Heart right ventricle (tissue), 16 donors: ENCODE measurements at regions of chr4 and their contacts with region 1.

Region 1: DNA sequence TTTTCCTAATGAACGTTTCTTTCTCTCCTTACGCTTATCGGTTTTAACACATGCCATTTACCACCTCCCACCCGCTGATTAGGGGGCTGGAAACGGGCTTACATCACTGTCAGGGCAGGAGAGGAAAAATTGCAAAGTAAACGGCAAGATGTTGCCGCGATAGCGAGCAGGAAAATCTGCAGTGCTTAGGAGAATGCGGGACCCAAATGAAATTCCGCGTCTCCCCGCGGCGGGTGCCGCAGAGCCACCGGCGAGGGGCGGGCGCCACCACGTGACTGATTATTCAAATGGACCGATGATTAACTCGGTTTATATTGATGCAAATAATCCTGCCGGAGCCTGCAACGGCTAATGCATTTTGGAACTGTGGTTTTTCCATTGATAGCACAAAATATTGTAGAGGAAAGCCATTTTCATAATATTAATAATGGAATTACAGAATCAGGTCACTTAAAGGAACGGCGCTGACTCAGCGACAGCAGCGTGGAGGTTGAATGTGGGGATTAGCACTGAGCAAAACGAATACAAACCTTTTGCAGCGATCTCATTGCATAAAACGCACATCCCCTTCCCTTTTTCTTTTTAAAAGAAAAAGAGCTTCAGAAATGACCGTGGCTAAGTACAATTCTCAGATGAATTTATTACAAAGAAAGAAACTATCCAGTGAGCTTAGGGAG is 224.2 kb downstream of the STIM2 start:
- DNase-seq: no peak
- ATAC-seq: peak in 1 of 8 donors; percentile 41
- H3K4me3 ChIP-seq: peak overlapping the region in 9 of 10 donors; percentile 0 to 46 (median 36)
- H3K27ac ChIP-seq: no peak overlapping the region
- H3K4me1 ChIP-seq: peaks cover 0 to 24% (median 9%) of the 10 kb centered on the region in 9 donors
- H3K27me3 ChIP-seq: peaks cover 0 to 69% (median 62%) of the 10 kb centered on the region in 7 donors
- CTCF ChIP-seq: peak in 2 of 9 donors; percentile 26 to 30

Region 2: DNA sequence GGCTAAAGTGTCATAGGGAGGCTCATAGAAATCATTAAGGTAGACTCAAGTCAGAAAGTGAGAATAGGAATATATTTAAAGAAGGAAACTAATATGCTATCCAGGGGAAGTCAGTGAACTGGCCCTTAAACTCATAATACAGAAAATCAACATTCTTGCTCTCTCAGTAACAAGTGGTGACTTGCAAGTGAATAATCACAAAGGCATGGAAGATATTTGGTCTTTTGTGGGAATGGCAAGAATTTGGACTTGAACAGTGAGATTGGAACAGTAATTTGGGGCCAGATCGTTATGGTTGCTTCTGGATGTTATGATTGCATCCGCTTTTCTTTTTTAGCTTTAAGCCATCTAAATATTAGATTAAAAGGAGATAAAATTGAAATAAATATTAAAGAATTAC is 397.1 kb before region 1 on chr4:
- intact Hi-C with region 1: no loop called
- DNase-seq: no peak
- ATAC-seq: no peak
- H3K4me3 ChIP-seq: no peak overlapping the region
- H3K27ac ChIP-seq: no peak overlapping the region
- H3K4me1 ChIP-seq: no peaks in the 10 kb centered on the region
- H3K27me3 ChIP-seq: no peaks in the 10 kb centered on the region
- CTCF ChIP-seq: no peak

Region 3: GRCh38 chr4:26916195-26916594 is 168.6 kb before region 1 on chr4:
- intact Hi-C with region 1: loop called in 1 of 10 experiments (anchors 10 kb)
- DNase-seq: no peak
- ATAC-seq: no peak
- H3K4me3 ChIP-seq: no peak overlapping the region
- H3K27ac ChIP-seq: no peak overlapping the region
- H3K4me1 ChIP-seq: peaks cover 0 to 44% (median 9%) of the 10 kb centered on the region in 9 donors
- H3K27me3 ChIP-seq: no peaks in the 10 kb centered on the region
- CTCF ChIP-seq: no peak

Region 4: DNA sequence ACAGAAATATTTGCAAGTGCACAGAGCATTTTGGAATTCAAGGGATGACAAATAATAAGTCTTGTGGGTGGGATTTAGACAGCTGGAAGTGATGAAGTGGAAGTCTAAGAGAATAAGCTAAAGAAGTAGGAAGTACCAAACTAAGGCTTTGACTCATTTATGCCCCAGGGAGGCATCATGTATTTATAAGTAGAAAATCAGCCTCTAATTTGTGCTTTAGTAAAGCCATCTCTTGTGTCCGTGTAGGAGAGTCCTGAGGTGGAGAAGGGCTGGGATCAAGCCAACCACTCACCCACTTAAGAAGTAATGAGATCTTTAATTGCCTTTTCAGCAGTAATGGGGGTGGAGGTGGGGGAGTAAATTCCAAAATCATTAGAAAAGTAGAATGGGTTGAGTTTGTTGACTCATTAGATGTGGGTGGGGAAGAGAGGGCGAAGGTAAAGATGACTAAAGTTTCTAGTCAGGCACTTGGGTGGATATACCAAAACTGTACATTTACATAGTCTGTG is 132.5 kb after region 1 on chr4:
- intact Hi-C with region 1: no loop called
- DNase-seq: no peak
- ATAC-seq: peak in 1 of 8 donors; percentile 14
- H3K4me3 ChIP-seq: no peak overlapping the region
- H3K27ac ChIP-seq: no peak overlapping the region
- H3K4me1 ChIP-seq: peaks cover 0 to 7% (median 0%) of the 10 kb centered on the region in 9 donors
- H3K27me3 ChIP-seq: no peaks in the 10 kb centered on the region
- CTCF ChIP-seq: no peak